Activated naive CD4-positive, alpha-beta T cell treated with anti-CD3 and anti-CD28 coated beads for 36 hours (primary cell): ENCODE measurements at regions of chr2 and their contacts with region 1.

Region 1: GRCh38 chr2:149040451-149040850 is 2.0 kb downstream of the LYPD6B start:
- DNase-seq: peak; percentile 73
- H3K4me3 Mint-ChIP-seq: no peak overlapping the region
- H3K27ac Mint-ChIP-seq: no peak overlapping the region
- H3K4me1 Mint-ChIP-seq: no peaks in the 10 kb centered on the region
- H3K27me3 Mint-ChIP-seq: peaks cover 42% of the 10 kb centered on the region

Region 2: GRCh38 chr2:149313512-149313972 is 273.1 kb after region 1 on chr2:
- CTCF ChIA-PET with region 1: no interaction called
- intact Hi-C with region 1: loop called (anchors 5 kb)
- DNase-seq: no peak
- H3K4me3 Mint-ChIP-seq: no peak overlapping the region
- H3K27ac Mint-ChIP-seq: no peak overlapping the region
- H3K4me1 Mint-ChIP-seq: peaks cover 4% of the 10 kb centered on the region
- H3K27me3 Mint-ChIP-seq: peaks cover 12% of the 10 kb centered on the region